Activated naive CD4-positive, alpha-beta T cell treated with anti-CD3 and anti-CD28 coated beads for 36 hours (primary cell): ENCODE measurements at regions of chr2 and their contacts with region 1.

Region 1: DNA sequence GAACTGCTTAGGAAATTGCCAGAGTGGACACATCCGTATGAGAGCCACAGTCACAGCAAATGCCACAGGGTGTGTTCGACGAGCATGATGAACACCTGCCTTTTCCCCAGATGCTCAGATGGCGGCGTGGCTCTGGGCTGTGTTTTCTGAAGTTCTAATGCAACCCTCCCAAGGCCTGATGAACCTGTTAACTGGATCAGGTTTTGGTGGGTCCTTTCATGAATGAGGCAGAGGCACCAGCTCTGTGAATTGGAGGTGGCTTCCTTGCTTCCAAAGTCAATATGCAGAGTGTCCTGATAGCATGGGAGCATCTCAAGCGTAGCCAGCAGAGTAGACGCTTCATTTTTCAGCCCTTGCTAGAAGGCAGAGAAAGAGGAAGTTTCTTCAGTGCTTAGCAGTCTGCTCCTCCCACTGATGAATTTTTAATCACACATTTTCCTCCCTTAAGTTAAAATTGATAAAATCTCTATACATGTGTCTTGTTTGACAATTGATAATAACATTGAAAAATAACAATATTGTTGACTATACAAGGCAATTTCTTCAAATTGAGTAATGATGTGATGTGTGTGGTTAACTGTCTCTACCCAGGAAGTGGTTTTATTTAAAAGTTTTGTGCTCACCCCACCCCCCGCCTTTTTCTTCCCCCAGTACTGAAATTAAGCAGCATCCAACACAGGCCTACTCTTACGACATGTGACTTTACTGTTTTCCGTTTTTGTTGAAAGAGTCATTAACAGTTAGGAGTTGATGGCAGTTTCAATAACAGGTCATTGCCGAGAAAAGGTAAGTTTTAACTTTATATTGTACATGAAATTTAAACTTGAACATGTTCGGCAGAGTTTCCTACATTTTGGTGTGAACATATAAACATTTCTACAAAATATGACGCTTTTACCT is at the start of gene ARHGAP15:
- DNase-seq: peak; percentile 88
- H3K4me3 Mint-ChIP-seq: peak within 1 kb of the TSS; percentile 86
- H3K27ac Mint-ChIP-seq: peak within 1 kb of the TSS; percentile 100
- H3K4me1 Mint-ChIP-seq: peaks cover 31% of the 10 kb centered on the region
- H3K27me3 Mint-ChIP-seq: no peaks in the 10 kb centered on the region
- total RNA-seq, gene ARHGAP15: 85.7 to 90.1 TPM

Region 2: DNA sequence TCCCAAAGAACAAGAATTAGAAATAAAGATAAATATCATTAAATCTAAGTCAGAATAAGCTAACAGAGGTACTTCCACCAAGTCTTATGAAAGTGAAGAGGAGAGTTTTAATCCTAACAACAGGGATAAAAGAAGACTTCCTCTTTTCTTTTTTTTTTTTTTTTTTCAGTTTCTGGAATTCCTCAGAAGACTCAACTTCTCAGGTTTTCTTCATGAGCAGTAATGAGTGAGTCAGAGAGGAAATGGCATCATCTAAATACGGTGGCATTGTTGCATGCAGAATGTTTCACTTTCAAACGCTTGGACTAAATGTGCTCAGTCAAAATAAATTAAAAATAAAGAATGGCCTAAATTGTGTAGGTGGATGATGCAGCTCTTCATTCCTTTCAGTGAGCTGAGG is 45.3 kb before region 1 on chr2:
- CTCF ChIA-PET with region 1: no interaction called
- intact Hi-C with region 1: loop called (anchors 1 kb)
- DNase-seq: peak; percentile 15
- H3K4me3 Mint-ChIP-seq: no peak overlapping the region
- H3K27ac Mint-ChIP-seq: no peak overlapping the region
- H3K4me1 Mint-ChIP-seq: peaks cover 27% of the 10 kb centered on the region
- H3K27me3 Mint-ChIP-seq: no peaks in the 10 kb centered on the region

Region 3: GRCh38 chr2:143140864-143141661 is 12.1 kb after region 1 on chr2:
- CTCF ChIA-PET with region 1: interaction called, 7 read pairs
- intact Hi-C with region 1: loop called (anchors 1 kb)
- DNase-seq: peak; percentile 44
- H3K4me3 Mint-ChIP-seq: peak overlapping the region; percentile 48
- H3K27ac Mint-ChIP-seq: peak overlapping the region; percentile 78
- H3K4me1 Mint-ChIP-seq: peaks cover 86% of the 10 kb centered on the region
- H3K27me3 Mint-ChIP-seq: no peaks in the 10 kb centered on the region

Region 4: DNA sequence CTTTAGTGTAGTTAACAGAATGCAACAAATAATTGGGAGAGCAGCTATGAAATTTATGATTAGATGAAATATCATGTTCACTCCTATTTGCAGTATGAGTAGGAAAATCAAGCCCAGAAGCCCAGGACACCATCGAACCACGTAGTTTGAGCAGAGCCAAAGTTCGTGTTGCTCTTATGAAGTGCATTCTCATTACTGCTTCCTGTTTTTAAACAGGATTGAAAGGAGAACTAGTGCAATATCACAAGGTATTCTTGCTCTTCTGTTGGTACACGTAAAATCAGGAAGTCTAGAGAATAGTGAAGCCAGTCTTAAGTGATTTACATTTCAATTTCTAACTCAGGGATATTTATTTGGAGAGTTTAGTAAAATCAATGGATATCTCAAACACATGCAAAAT is 21.4 kb after region 1 on chr2:
- CTCF ChIA-PET with region 1: interaction called, 4 read pairs
- intact Hi-C with region 1: loop called (anchors 1 kb)
- DNase-seq: peak; percentile 33
- H3K4me3 Mint-ChIP-seq: peak overlapping the region; percentile 52
- H3K27ac Mint-ChIP-seq: peak overlapping the region; percentile 91
- H3K4me1 Mint-ChIP-seq: peaks cover 80% of the 10 kb centered on the region
- H3K27me3 Mint-ChIP-seq: no peaks in the 10 kb centered on the region

Region 5: DNA sequence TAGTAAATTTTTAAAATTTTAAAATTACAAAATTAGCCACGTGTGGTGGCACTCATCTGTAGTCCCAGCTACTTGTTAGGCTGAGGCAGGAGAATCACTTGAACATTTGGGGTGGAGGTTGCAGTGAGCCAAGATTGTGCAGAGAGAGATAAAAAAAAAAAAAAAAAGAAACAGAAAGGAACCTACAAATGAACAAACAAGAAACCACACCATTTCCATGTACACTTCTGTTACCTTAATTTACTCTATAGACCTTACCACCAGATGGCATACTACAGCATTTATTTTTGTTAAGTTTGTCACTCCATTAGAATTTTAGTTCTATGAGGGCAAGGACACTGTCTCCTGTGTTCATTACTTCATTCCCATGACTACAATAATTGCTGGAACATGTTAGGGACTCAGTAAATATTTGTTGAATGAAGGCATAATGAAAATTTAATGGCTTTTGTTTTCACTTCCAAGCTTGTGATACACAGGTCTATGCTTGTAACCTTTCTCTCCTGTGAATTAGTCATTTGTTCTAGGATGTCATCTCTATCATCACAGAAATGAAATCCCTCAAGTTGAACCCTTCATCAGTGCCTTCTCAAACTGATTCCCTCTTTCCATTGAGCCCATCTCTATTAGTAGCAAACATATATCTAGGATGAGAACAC is 76.3 kb after region 1 on chr2:
- CTCF ChIA-PET with region 1: no interaction called
- intact Hi-C with region 1: loop called (anchors 1 kb)
- DNase-seq: no peak
- H3K4me3 Mint-ChIP-seq: no peak overlapping the region
- H3K27ac Mint-ChIP-seq: peak overlapping the region; percentile 78
- H3K4me1 Mint-ChIP-seq: peaks cover 53% of the 10 kb centered on the region
- H3K27me3 Mint-ChIP-seq: no peaks in the 10 kb centered on the region

Region 6: DNA sequence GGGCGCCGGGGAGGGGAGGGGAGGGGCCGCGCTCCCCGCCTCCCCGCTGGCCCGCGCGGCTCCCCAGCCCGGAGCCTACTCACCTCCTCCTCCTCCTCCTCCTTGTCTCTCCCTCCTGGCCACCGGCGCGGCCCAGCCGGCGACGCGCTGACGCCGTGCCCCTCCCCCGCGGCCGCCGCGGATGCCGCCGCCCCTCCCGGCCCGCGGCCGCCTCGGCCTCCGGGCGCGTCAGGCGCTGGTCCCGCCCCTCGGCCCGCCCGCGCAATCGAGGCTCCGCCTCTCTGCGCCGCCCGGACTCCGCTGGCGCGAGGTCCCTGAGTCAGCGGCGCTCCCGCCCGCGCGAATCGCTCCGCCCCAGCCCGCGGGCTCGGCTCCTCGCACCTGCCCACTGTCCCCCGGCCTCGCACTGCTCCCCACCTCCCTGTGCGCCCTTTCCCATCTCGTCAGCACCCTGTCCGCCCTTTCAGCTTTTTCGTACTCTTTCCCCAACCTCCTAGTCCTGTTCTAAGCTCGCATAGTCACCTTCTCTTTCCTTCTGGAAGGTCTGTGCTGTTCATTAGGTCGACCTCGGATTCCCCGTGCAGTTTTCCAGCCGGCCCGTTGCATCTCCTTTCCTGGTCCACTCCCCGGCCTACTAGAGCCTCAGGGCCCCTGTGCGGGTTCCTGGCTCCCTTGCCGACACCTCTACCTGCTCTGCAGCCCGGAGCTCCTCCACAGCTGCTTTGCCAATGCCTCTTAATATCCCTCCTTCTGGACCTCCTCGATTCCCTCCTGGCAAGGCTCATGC is 1203.6 kb after region 1 on chr2:
- CTCF ChIA-PET with region 1: no interaction called
- intact Hi-C with region 1: loop called (anchors 5 kb)
- DNase-seq: peak; percentile 83
- H3K4me3 Mint-ChIP-seq: peak overlapping the region; percentile 79
- H3K27ac Mint-ChIP-seq: peak overlapping the region; percentile 78
- H3K4me1 Mint-ChIP-seq: peaks cover 19% of the 10 kb centered on the region
- H3K27me3 Mint-ChIP-seq: no peaks in the 10 kb centered on the region